ENCODE measurements at regions of chr2 and their contacts with region 1.

Region 1: DNA sequence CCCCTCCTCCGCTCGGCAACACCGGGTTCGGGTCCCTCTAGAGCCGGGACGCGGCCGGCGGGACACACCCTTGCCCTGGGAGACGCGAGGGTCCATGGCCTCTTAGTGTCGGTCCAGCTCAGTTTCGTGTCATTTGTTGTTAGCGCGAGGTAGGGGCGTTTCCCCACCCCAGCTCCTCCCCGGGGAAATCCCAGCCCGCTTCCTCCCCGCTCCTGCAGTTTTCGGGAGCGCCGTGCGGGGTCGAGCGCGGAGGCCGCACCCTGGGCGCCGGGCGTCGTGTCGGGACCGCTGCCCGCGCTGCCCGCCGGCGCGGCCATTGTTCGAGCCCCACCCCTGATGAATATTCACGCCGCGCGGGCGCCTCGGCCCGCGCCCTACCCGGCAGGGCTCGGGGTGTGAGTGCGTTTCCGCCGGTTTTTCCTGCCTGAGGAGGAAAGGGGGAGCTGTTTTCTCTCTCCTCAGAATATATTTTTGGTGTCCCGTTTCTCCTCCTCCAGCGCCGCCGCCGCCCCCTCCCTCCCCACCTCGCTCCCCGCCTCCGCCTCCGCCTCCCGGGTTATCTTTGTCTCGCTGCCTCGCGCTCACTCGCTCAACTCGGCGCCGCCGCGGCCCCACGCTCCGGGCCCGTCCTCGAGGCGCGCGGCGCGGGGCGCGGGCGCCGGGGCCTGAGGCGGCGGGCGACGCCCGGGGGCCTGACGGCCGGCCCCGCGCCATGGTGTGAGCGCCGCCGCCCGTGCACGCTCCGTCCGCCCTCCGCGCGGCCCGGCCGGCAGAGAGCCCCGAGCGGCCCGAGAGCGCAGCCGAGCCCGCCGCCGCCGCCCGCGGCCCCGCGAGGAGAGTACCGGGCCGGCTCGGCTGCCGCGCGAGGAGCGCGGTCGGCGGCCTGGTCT is at the start of gene MAP4K4:
- DNase-seq: peak; percentile 88 to 91
- ATAC-seq: peak; percentile 85 to 92 (median 88)
- H3K4me3 ChIP-seq: peak within 1 kb of the TSS; percentile 53 to 81 (median 73)
- H3K27ac ChIP-seq: peak within 1 kb of the TSS; percentile 79 to 95 (median 92)
- H3K4me1 ChIP-seq: peaks cover 0 to 47% (median 27%) of the 10 kb centered on the region in 9 donors
- H3K27me3 ChIP-seq: no peaks in the 10 kb centered on the region
- CTCF ChIP-seq: peak in 7 of 9 donors; percentile 21 to 66 (median 51)
- total RNA-seq, gene MAP4K4: 74.5 to 116 (median 96.0) TPM

Region 2: GRCh38 chr2:101111917-101112783 is 585.2 kb before region 1 on chr2:
- intact Hi-C with region 1: no loop called
- DNase-seq: peak in 1 of 2 donors; percentile 89
- ATAC-seq: peak; percentile 78 to 90 (median 87)
- H3K4me3 ChIP-seq: no peak overlapping the region
- H3K27ac ChIP-seq: peak overlapping the region; percentile 79 to 93 (median 86)
- H3K4me1 ChIP-seq: peaks cover 33 to 98% (median 76%) of the 10 kb centered on the region in 9 donors
- H3K27me3 ChIP-seq: no peaks in the 10 kb centered on the region
- CTCF ChIP-seq: no peak

Region 3: GRCh38 chr2:101419096-101419663 is 278.2 kb before region 1 on chr2:
- intact Hi-C with region 1: loop called in 5 of 10 experiments (anchors 10 kb)
- DNase-seq: peak in 1 of 2 donors; percentile 79
- ATAC-seq: peak; percentile 70 to 91 (median 82)
- H3K4me3 ChIP-seq: no peak overlapping the region
- H3K27ac ChIP-seq: no peak overlapping the region
- H3K4me1 ChIP-seq: peaks cover 0 to 7% (median 0%) of the 10 kb centered on the region in 9 donors
- H3K27me3 ChIP-seq: peaks cover 0 to 6% (median 0%) of the 10 kb centered on the region in 7 donors
- CTCF ChIP-seq: peak; percentile 71 to 87 (median 82)

Region 4: GRCh38 chr2:101518578-101519492 is 178.5 kb before region 1 on chr2:
- intact Hi-C with region 1: loop called in 5 of 10 experiments (anchors 5 to 10 kb)
- DNase-seq: peak; percentile 39 to 66
- ATAC-seq: peak; percentile 68 to 83 (median 79)
- H3K4me3 ChIP-seq: peak overlapping the region in 2 of 10 donors; percentile 21 to 24
- H3K27ac ChIP-seq: peak overlapping the region in 6 of 10 donors; percentile 5 to 64 (median 30)
- H3K4me1 ChIP-seq: peaks cover 0 to 55% (median 30%) of the 10 kb centered on the region in 9 donors
- H3K27me3 ChIP-seq: peaks cover 0 to 22% (median 0%) of the 10 kb centered on the region in 7 donors
- CTCF ChIP-seq: peak in 8 of 9 donors; percentile 22 to 71 (median 50)

Region 5: GRCh38 chr2:101751875-101752619 is 54.7 kb after region 1 on chr2:
- intact Hi-C with region 1: loop called in 4 of 10 experiments (anchors 5 to 10 kb)
- DNase-seq: no peak
- ATAC-seq: peak in 4 of 8 donors; percentile 30 to 48 (median 38)
- H3K4me3 ChIP-seq: no peak overlapping the region
- H3K27ac ChIP-seq: peak overlapping the region in 5 of 10 donors; percentile 17 to 52 (median 37)
- H3K4me1 ChIP-seq: peaks cover 24 to 81% (median 74%) of the 10 kb centered on the region in 9 donors
- H3K27me3 ChIP-seq: no peaks in the 10 kb centered on the region
- CTCF ChIP-seq: no peak

Region 6: GRCh38 chr2:101823347-101823791 is 126.0 kb after region 1 on chr2:
- intact Hi-C with region 1: loop called in 7 of 10 experiments (anchors 2 to 10 kb)
- DNase-seq: peak in 1 of 2 donors; percentile 76
- ATAC-seq: peak; percentile 27 to 76 (median 61)
- H3K4me3 ChIP-seq: no peak overlapping the region
- H3K27ac ChIP-seq: no peak overlapping the region
- H3K4me1 ChIP-seq: peaks cover 19 to 89% (median 71%) of the 10 kb centered on the region in 9 donors
- H3K27me3 ChIP-seq: no peaks in the 10 kb centered on the region
- CTCF ChIP-seq: peak; percentile 33 to 77 (median 71)

Region 7: DNA sequence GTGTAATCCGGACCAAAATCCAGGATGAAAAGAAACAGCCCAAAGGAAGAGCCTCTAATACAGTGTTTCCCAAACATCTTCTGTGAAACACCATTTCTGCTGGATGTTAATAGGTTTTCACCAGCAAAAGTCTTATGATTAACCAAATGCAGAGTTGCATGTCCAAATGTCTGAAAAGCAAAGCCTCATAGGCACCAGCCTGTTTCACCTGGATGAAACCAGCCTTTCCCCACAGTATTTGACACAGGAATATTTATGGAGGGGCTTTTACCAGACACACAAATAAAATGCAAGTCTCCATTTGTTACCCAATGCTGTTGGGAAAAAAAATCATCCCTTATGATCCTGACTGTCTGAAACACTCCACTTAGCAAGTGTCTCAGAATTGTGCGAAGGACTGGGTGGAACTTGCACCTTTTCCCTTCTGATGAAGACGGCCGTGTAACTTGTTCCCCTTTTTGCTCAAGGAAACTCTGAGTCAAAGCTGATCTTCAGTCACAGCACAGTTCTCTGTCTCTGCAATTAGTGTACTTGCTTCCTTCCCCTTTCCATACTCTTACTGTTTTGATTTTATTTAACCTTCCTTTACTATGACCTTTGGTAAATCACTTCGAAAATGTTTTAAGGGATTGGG is 224.1 kb after region 1 on chr2:
- intact Hi-C with region 1: no loop called
- DNase-seq: no peak
- ATAC-seq: peak in 5 of 8 donors; percentile 30 to 76 (median 55)
- H3K4me3 ChIP-seq: no peak overlapping the region
- H3K27ac ChIP-seq: peak overlapping the region in 3 of 10 donors; percentile 23 to 86 (median 41)
- H3K4me1 ChIP-seq: peaks cover 0 to 8% (median 0%) of the 10 kb centered on the region in 9 donors
- H3K27me3 ChIP-seq: no peaks in the 10 kb centered on the region
- CTCF ChIP-seq: no peak

Measured in heart right ventricle (tissue), 16 donors.